ENCODE measurements at regions of chr17 and their contacts with region 1.

Region 1: GRCh38 chr17:8581002-8581658 is 49.4 kb downstream of the MYH10 start:
- DNase-seq: no peak
- ATAC-seq: no peak
- H3K4me3 ChIP-seq: no peak overlapping the region
- H3K27ac ChIP-seq: no peak overlapping the region
- H3K4me1 ChIP-seq: peaks cover 0 to 16% (median 0%) of the 10 kb centered on the region in 12 donors
- H3K27me3 ChIP-seq: no peaks in the 10 kb centered on the region
- CTCF ChIP-seq: no peak
- POLR2A ChIP-seq: no peak

Region 2: DNA sequence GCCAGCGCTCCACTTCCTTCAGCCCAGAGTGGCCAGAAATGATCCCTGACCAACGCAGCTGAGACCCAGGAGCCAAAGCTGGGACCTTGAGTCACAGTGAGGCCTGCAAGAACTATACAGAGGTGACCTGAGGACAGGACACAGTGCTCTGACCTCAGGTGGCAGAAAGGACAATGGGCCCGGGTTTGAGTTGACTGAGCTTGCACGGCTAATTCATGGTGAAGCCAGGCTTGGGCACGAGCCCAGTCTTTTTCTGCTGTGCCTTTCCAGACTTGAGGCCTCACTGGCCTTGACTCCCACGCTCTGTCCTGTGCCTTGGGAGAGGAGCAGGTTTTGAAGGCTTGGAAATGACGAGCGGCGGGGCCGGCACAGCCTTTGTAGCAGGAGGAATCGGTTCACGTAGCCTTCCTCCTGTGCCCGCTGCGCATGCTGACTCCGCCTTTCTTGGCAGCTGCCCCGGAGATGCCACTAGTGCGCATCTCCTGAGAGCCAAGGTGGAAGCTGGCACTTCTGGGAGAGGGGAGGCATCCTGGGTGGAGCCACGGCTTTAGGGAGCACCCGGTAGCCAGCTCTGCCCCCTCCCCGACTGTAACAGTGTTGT is 110.6 kb before region 1 on chr17:
- intact Hi-C with region 1: no loop called
- DNase-seq: peak; percentile 47 to 78 (median 70)
- ATAC-seq: peak; percentile 14 to 54 (median 50)
- H3K4me3 ChIP-seq: peak overlapping the region in 1 of 12 donors; percentile 18
- H3K27ac ChIP-seq: peak overlapping the region in 11 of 12 donors; percentile 1 to 53 (median 34)
- H3K4me1 ChIP-seq: peaks cover 0 to 52% (median 18%) of the 10 kb centered on the region in 12 donors
- H3K27me3 ChIP-seq: no peaks in the 10 kb centered on the region
- CTCF ChIP-seq: no peak
- POLR2A ChIP-seq: no peak

Region 3: GRCh38 chr17:8668176-8668740 is 87.1 kb after region 1 on chr17:
- intact Hi-C with region 1: loop called in 1 of 10 experiments (anchors 10 kb)
- DNase-seq: no peak
- ATAC-seq: no peak
- H3K4me3 ChIP-seq: no peak overlapping the region
- H3K27ac ChIP-seq: no peak overlapping the region
- H3K4me1 ChIP-seq: peaks cover 0 to 10% (median 2%) of the 10 kb centered on the region in 12 donors
- H3K27me3 ChIP-seq: no peaks in the 10 kb centered on the region
- CTCF ChIP-seq: no peak
- POLR2A ChIP-seq: no peak